Natural killer cell (primary cell): ENCODE measurements at regions of chr16 and their contacts with region 1.

Region 1: DNA sequence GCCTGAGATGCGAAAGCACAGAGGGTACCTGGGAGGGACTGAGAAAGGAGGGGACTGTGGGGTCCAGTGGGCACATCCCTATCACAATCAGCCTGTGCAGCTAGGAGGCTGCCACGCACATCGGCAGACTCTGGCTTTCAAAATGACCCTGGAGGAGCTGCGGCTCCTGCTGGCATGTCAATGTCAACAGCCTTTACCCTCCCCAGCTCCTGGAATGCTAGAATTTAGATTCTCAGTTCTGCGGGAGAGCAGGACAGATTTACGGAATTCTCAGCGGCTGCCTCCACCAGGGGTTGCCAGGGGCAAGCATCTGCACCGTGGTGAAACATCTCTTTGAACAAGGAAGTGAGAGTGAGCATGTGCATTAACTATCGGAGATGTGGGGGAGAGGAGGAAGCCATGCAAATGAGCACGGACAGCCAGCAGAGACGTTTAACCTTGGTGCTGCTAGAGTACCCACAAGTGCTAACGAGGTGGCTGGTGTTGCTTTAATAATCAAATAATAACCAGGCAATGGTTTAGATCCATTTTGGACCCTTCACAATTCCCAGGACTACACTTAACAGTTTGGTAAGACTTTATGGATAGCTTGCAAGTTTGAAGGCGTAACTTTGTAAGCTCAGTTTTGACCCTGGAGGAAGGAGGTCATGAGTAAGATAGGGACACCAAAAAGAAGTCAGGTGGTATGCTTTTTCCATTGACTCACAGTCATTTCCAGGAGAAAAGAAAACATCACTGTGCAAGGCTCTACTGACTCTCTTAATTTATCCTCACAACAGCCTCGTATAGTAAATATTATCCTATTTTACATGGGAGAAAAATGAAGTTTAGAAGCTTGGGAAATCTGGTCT is 54.1 kb downstream of the XYLT1 start:
- DNase-seq: peak; percentile 23 to 78
- ATAC-seq: peak; percentile 89 to 94 (median 90)
- H3K4me3 ChIP-seq: peak overlapping the region; percentile 11
- H3K4me3 Mint-ChIP-seq: peak overlapping the region; percentile 90
- H3K27ac ChIP-seq: peak overlapping the region; percentile 51
- H3K27ac Mint-ChIP-seq: peak overlapping the region; percentile 84 to 90
- H3K4me1 ChIP-seq: peaks cover 50% of the 10 kb centered on the region
- H3K4me1 Mint-ChIP-seq: peaks cover 60 to 64% of the 10 kb centered on the region in 2 donors
- H3K27me3 ChIP-seq: no peaks in the 10 kb centered on the region
- H3K27me3 Mint-ChIP-seq: no peaks in the 10 kb centered on the region
- CTCF ChIP-seq: peak; percentile 39

Region 2: DNA sequence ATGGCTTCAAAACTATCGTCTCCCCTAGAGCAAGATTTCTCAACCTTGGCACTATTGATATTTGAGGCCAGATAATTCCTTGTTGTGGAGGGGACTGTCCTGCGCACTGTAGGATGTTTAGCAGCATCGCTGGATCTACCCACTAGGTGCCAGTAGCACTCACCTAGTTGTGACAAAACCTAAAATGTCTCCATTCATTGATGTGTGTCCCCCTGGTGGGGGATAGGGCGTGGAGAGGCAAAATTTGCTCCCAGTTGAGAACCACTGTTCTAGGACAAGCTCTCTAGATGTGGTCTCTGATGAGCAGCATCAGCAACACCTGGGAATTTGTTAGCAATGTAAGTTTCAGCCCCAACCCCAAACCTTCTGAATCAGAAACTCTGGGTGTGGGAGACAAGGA is 204.9 kb before region 1 on chr16:
- intact Hi-C with region 1: loop called (anchors 10 kb)
- DNase-seq: peak in 1 of 2 donors; percentile 63
- ATAC-seq: peak; percentile 50 to 77 (median 77)
- H3K4me3 ChIP-seq: no peak overlapping the region
- H3K4me3 Mint-ChIP-seq: no peak overlapping the region
- H3K27ac ChIP-seq: no peak overlapping the region
- H3K27ac Mint-ChIP-seq: no peak overlapping the region
- H3K4me1 ChIP-seq: no peaks in the 10 kb centered on the region
- H3K4me1 Mint-ChIP-seq: peaks cover 6 to 9% of the 10 kb centered on the region in 2 donors
- H3K27me3 ChIP-seq: no peaks in the 10 kb centered on the region
- H3K27me3 Mint-ChIP-seq: no peaks in the 10 kb centered on the region
- CTCF ChIP-seq: peak; percentile 18

Region 3: DNA sequence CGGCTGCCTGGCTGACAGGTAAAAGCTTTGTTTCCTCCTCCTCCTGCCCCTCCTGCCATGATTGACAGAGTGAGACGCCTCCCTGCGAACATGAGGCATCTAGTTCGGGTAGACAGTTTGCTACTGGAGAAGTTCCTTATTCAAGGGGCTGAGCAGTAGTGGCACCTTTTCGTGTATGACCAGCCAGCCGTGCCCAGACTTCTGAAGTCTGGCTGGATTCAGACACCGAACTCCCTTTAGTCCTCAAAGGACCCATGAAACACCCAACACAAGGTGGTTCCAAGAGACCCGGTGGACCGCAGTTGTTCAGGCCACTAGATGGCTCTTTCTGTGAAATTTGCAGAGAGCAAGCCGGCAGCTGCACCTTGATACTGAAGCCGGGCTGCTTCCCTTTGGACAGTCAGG is 138.7 kb before region 1 on chr16:
- intact Hi-C with region 1: loop called (anchors 10 kb)
- DNase-seq: peak in 1 of 2 donors; percentile 37
- ATAC-seq: no peak
- H3K4me3 ChIP-seq: no peak overlapping the region
- H3K4me3 Mint-ChIP-seq: no peak overlapping the region
- H3K27ac ChIP-seq: no peak overlapping the region
- H3K27ac Mint-ChIP-seq: no peak overlapping the region
- H3K4me1 ChIP-seq: peaks cover 42% of the 10 kb centered on the region
- H3K4me1 Mint-ChIP-seq: peaks cover 61 to 64% of the 10 kb centered on the region in 2 donors
- H3K27me3 ChIP-seq: no peaks in the 10 kb centered on the region
- H3K27me3 Mint-ChIP-seq: no peaks in the 10 kb centered on the region
- CTCF ChIP-seq: no peak

Region 4: GRCh38 chr16:17369421-17370222 is 47.1 kb before region 1 on chr16:
- intact Hi-C with region 1: loop called (anchors 2 kb)
- DNase-seq: peak; percentile 68 to 92
- ATAC-seq: peak; percentile 80 to 92 (median 88)
- H3K4me3 ChIP-seq: peak overlapping the region; percentile 8
- H3K4me3 Mint-ChIP-seq: peak overlapping the region; percentile 94
- H3K27ac ChIP-seq: peak overlapping the region; percentile 92
- H3K27ac Mint-ChIP-seq: peak overlapping the region; percentile 96 to 99
- H3K4me1 ChIP-seq: peaks cover 75% of the 10 kb centered on the region
- H3K4me1 Mint-ChIP-seq: peaks cover 89 to 96% of the 10 kb centered on the region in 2 donors
- H3K27me3 ChIP-seq: no peaks in the 10 kb centered on the region
- H3K27me3 Mint-ChIP-seq: no peaks in the 10 kb centered on the region
- CTCF ChIP-seq: no peak

Region 5: DNA sequence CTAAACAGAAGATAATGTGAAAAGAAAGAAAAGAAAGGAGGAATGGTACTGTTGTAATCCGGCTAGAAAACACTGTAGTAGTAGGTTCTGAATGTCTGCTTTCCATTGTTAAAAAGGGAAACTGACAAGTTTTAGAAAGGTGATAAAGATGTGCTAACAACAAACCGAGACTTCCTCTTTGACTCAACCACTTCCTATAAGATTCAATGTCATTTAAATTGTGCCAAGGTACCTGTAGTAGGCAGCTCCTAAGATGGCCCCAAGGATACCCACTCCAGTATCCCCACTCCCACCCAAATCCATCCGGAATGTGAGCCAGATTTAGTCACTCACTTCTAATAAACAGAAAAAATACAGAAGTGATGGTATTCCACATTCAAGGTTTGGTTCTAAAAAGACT is 22.9 kb after region 1 on chr16:
- intact Hi-C with region 1: loop called (anchors 2 kb)
- DNase-seq: peak in 1 of 2 donors; percentile 48
- ATAC-seq: peak; percentile 47 to 86 (median 70)
- H3K4me3 ChIP-seq: no peak overlapping the region
- H3K4me3 Mint-ChIP-seq: peak overlapping the region; percentile 71
- H3K27ac ChIP-seq: no peak overlapping the region
- H3K27ac Mint-ChIP-seq: peak overlapping the region; percentile 27 to 59
- H3K4me1 ChIP-seq: peaks cover 31% of the 10 kb centered on the region
- H3K4me1 Mint-ChIP-seq: peaks cover 80 to 83% of the 10 kb centered on the region in 2 donors
- H3K27me3 ChIP-seq: no peaks in the 10 kb centered on the region
- H3K27me3 Mint-ChIP-seq: no peaks in the 10 kb centered on the region
- CTCF ChIP-seq: no peak

Region 6: GRCh38 chr16:17448640-17449638 is 32.3 kb after region 1 on chr16:
- intact Hi-C with region 1: loop called (anchors 5 kb)
- DNase-seq: peak; percentile 34 to 78
- ATAC-seq: peak; percentile 78 to 87 (median 82)
- H3K4me3 ChIP-seq: no peak overlapping the region
- H3K4me3 Mint-ChIP-seq: peak overlapping the region; percentile 82
- H3K27ac ChIP-seq: peak overlapping the region; percentile 61
- H3K27ac Mint-ChIP-seq: peak overlapping the region; percentile 90 to 91
- H3K4me1 ChIP-seq: peaks cover 58% of the 10 kb centered on the region
- H3K4me1 Mint-ChIP-seq: peaks cover 65 to 80% of the 10 kb centered on the region in 2 donors
- H3K27me3 ChIP-seq: no peaks in the 10 kb centered on the region
- H3K27me3 Mint-ChIP-seq: no peaks in the 10 kb centered on the region
- CTCF ChIP-seq: no peak

Region 7: DNA sequence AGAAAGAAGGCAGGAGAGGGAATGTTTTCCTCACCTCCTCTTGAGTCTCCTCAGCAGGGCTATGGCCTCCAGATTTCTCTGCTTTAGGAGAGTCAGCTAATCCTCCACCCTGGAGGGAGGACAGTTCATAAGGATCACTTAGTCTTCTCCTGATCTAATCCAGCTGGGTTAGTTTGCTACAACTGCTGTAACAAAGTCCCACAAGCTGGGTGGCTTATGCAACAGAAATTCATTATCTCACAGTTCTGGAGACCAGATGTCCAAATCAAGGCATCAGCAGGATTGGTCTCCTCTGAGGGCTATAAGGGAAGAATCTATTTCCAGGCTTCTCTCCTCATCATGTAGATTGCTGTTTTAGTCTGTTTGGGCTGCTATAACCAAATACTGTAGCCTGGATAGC is 94.7 kb after region 1 on chr16:
- intact Hi-C with region 1: loop called (anchors 10 kb)
- DNase-seq: no peak
- ATAC-seq: no peak
- H3K4me3 ChIP-seq: no peak overlapping the region
- H3K4me3 Mint-ChIP-seq: no peak overlapping the region
- H3K27ac ChIP-seq: no peak overlapping the region
- H3K27ac Mint-ChIP-seq: no peak overlapping the region
- H3K4me1 ChIP-seq: no peaks in the 10 kb centered on the region
- H3K4me1 Mint-ChIP-seq: no peaks in the 10 kb centered on the region
- H3K27me3 ChIP-seq: no peaks in the 10 kb centered on the region
- H3K27me3 Mint-ChIP-seq: peaks cover 26 to 29% of the 10 kb centered on the region in 2 donors
- CTCF ChIP-seq: no peak